Mammary epithelial cell (primary cell): ENCODE measurements at regions of chr2 and their contacts with region 1.

Region 1: DNA sequence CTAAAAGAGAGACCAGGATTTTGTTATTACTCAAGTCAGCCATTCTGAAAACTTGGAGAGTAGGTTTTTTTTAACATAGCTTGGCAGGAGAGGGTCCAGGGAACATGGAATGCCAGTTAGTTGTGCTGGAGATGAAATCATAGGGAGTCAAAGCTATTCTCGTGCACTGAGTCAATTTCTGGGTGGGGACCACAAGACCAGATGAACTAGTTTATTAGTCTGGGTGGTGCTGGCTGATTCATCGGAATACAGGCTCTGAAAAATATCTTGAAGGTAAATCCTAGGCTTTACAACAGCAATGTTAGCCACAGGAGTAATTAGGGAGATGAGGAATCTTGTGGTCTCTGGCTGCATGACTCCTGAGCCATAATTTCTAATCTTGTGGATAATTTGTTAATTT is 921.4 kb downstream of the TRIB2 start:
- DNase-seq: peak; percentile 94
- H3K4me3 ChIP-seq: no peak overlapping the region
- H3K27ac ChIP-seq: peak overlapping the region; percentile 42
- H3K4me1 ChIP-seq: peaks cover 6% of the 10 kb centered on the region
- H3K27me3 ChIP-seq: no peaks in the 10 kb centered on the region
- CTCF ChIP-seq: no peak

Region 2: DNA sequence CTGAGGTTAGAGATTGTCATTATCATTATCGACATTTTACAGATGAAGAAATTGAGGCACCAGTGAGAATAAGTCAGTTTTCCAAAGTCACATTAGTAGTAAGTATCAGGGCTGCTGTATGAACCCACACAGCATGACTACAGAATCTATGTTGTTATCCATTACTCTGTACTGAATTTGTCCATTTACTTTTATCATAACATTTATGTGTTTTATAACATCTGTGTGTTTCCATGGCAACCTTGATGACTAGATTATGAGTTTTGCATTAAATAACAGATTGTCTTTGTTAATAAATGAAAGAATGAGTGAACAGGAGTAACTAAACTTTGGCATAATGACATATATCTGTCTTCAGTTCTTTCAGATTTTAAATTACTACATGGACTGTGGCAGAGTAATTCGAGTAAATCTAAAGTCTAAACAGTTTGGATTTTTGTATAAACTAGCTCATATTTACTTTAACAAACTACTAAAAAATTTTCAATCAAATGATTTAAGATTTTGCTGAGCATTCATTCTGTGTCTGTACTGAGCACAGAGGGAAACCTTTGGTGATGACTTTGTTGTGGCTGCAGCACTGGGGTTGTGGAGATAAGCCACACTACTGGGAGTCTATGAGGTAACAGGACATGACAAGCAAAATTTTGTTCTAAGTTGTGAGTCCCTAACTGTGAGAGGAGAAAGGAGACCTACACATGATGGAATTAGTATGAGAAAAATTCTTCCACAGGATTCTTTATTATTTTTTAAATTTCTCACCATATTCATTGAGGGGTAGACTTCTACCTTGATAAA is 60.5 kb after region 1 on chr2:
- CTCF ChIA-PET with region 1: no interaction called
- dilution Hi-C with region 1: no loop called
- in situ Hi-C with region 1: no loop called
- intact Hi-C with region 1: loop called (anchors 10 kb)
- DNase-seq: no peak
- H3K4me3 ChIP-seq: no peak overlapping the region
- H3K27ac ChIP-seq: no peak overlapping the region
- H3K4me1 ChIP-seq: peaks cover 3% of the 10 kb centered on the region
- H3K27me3 ChIP-seq: no peaks in the 10 kb centered on the region
- CTCF ChIP-seq: no peak

Region 3: DNA sequence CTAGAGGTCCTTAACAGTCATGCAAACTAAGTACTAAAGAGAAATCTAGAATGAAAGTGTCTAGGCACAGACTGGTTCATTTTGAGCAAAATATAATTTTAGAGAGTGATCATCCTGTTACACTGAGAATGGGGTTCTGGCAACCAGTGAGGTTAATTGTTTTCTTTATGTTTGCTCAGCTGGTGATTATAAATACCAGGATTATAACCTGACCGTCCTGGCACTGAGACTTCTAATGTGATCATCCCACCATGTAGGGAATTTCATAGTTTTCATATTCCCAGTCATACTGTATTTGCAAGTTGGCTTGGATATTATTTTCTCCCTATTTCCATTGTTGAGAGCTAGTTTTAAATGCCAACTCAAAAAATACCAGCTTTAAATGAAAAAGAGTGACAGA is 141.8 kb after region 1 on chr2:
- CTCF ChIA-PET with region 1: no interaction called
- dilution Hi-C with region 1: no loop called
- in situ Hi-C with region 1: no loop called
- intact Hi-C with region 1: no loop called
- DNase-seq: no peak
- H3K4me3 ChIP-seq: no peak overlapping the region
- H3K27ac ChIP-seq: no peak overlapping the region
- H3K4me1 ChIP-seq: no peaks in the 10 kb centered on the region
- H3K27me3 ChIP-seq: peaks cover 1% of the 10 kb centered on the region
- CTCF ChIP-seq: no peak

Region 4: DNA sequence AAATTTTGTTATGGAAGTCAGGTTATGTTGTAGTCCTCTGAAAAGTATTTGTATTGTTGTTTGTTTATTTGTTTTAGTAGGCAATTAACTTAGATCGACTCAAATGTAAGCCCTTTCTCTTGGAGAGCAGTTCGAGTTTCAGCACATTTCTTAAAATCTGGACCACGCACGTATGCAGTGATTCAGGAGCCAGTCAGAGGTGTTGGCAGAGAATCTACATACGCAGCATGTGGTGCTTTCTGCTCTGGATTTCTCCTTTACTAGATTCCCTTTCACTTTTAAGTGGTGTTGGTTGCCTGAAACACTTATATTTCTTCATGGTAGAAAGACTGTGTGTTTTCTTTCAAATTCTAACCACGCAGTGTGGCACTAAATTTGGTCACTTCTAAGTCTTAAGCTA is 220.4 kb after region 1 on chr2:
- CTCF ChIA-PET with region 1: no interaction called
- dilution Hi-C with region 1: no loop called
- in situ Hi-C with region 1: no loop called
- intact Hi-C with region 1: no loop called
- DNase-seq: peak; percentile 8
- H3K4me3 ChIP-seq: no peak overlapping the region
- H3K27ac ChIP-seq: no peak overlapping the region
- H3K4me1 ChIP-seq: no peaks in the 10 kb centered on the region
- H3K27me3 ChIP-seq: no peaks in the 10 kb centered on the region
- CTCF ChIP-seq: no peak